Caco-2 (cell line): ENCODE measurements at regions of chr20 and their contacts with region 1.

Region 1: DNA sequence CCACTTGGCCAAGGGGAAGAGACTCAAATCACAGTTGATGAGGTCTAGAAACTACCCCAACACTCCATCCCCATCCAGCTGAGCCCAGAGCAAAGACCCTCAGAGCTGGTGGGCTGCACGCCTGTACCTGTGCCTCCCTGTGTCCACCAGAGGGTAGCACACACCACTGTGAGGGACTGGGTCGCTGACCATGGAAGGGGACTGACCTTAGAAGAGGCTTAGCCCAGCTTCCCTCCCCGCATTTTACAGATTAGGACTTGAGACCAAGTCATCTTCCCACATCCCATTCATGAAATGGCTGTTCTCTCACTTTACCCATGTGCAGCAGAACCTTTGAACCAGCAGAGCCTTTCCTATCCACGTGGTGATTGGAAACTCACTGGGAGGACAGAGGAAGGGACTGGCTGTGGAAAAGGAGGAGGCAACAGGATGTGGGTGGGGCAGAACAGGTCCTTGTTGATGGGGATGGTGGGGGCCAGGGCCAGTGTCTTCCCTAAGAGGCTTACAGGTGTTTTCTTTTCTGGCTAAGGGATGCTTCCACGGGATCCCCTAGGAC is 44.3 kb downstream of the CPXM1 start:
- DNase-seq: peak; percentile 48 to 61
- H3K4me3 ChIP-seq: no peak overlapping the region
- H3K4me3 Mint-ChIP-seq: no peak overlapping the region
- H3K27ac Mint-ChIP-seq: no peak overlapping the region
- H3K4me1 ChIP-seq: peaks cover 13% of the 10 kb centered on the region
- H3K4me1 Mint-ChIP-seq: peaks cover 8% of the 10 kb centered on the region
- H3K27me3 ChIP-seq: no peaks in the 10 kb centered on the region; the same call in 1 of the 2 replicates
- H3K27me3 Mint-ChIP-seq: peaks cover 7% of the 10 kb centered on the region
- CTCF ChIP-seq: peak; percentile 70 to 79

Region 2: DNA sequence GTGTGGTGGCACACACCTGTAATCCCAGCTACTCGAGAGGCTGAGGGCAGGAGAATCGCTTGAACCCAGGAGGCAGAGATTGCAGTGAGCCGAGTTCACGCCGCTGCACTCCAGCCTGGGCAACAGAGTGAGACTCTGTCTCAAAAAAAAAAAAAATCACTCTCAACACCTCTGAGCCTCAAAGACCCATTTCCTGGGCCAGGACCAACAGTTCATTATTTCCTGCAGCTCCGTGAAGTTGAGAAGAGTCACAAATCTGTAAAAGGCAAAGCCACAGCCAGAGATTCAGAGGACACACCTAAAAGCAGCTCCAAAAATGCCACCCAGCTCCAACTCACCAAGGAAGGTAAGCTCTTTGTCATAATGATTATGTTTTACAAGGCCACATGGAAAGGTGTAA is 118.9 kb before region 1 on chr20:
- CTCF ChIA-PET with region 1: no interaction called
- POLR2A ChIA-PET with region 1: no interaction called
- intact Hi-C with region 1: no loop called
- DNase-seq: no peak
- H3K4me3 ChIP-seq: no peak overlapping the region
- H3K4me3 Mint-ChIP-seq: no peak overlapping the region
- H3K27ac Mint-ChIP-seq: no peak overlapping the region
- H3K4me1 ChIP-seq: no peaks in the 10 kb centered on the region
- H3K4me1 Mint-ChIP-seq: no peaks in the 10 kb centered on the region
- H3K27me3 ChIP-seq: no peaks in the 10 kb centered on the region
- H3K27me3 Mint-ChIP-seq: no peaks in the 10 kb centered on the region
- CTCF ChIP-seq: no peak

Region 3: DNA sequence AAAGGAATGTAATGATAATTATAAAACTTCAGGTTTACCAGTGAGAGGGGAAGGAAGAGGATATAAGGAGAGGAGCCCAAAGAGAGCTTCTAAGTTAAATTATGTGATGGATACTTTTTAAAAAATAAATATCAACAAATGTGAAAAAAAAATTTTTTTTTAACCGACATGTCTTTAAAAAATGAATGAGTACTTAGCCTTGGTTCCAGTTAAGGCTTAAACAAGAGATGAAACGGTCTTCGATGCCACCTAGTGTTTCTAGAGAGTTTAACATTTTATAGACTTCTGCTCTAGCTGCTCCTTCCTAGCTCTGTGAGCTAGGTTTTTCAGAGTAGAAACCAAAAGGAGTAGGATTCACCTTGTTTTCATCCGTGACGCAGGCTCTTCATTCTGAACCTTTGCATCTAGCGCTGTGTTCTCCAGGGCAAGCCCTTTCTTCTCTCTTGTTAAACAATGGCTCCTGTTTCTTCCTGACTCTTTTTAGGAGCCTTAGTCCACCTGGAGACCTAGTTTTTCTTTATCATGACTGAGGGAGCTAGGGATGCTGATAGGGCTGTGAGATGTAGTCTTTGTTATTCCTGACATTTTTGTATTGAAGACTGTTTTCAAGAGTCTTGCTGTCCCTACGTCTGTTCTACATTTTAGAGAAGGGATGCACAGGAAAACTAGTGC is 244.9 kb after region 1 on chr20:
- CTCF ChIA-PET with region 1: interaction called, 7 read pairs
- POLR2A ChIA-PET with region 1: no interaction called
- intact Hi-C with region 1: loop called (anchors 1 kb)
- DNase-seq: peak in 1 of 2 experiments; percentile 60
- H3K4me3 ChIP-seq: no peak overlapping the region
- H3K4me3 Mint-ChIP-seq: no peak overlapping the region
- H3K27ac Mint-ChIP-seq: no peak overlapping the region
- H3K4me1 ChIP-seq: no peaks in the 10 kb centered on the region
- H3K4me1 Mint-ChIP-seq: no peaks in the 10 kb centered on the region
- H3K27me3 ChIP-seq: no peaks in the 10 kb centered on the region
- H3K27me3 Mint-ChIP-seq: no peaks in the 10 kb centered on the region
- CTCF ChIP-seq: peak; percentile 51 to 60